ENCODE measurements at regions of chr3 and their contacts with region 1.

Region 1: DNA sequence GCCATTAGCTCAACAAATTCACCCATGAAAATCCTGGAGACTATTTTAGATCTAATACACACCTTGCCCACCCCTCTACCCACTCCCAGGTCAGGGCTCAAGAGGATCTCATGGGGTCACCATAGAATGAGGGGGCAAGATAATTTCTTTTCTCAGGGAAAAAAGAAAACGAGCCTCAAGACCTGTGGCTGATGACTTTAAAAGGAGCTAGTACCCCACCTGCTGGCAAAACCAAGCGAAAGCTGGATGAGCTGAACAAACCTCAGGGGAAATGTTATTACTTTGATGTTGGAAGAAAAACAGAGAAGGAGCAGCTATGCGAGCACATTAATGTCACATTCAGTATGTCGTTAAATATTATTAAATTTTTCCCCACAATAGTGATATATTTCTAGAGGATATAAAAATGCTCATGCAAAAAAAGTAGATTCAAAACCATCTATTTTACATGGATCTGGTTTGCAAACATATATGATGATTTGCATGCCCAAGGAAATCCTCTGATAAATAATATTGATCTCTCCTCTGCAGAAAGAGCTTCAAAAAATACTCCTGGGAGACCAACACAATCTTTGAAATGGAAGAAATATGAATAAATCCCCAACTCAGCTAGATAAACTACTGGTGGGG is 37.7 kb downstream of the PLD1 start:
- DNase-seq: peak in 1 of 2 donors; percentile 74
- H3K4me3 ChIP-seq: peak overlapping the region in 1 of 2 donors; percentile 64
- H3K27ac ChIP-seq: peak overlapping the region in 1 of 2 donors; percentile 67
- H3K4me1 ChIP-seq: peaks cover 0 to 19% of the 10 kb centered on the region in 2 donors
- H3K27me3 ChIP-seq: no peaks in the 10 kb centered on the region
- CTCF ChIP-seq: peak; percentile 52 to 74 (median 62)

Region 2: DNA sequence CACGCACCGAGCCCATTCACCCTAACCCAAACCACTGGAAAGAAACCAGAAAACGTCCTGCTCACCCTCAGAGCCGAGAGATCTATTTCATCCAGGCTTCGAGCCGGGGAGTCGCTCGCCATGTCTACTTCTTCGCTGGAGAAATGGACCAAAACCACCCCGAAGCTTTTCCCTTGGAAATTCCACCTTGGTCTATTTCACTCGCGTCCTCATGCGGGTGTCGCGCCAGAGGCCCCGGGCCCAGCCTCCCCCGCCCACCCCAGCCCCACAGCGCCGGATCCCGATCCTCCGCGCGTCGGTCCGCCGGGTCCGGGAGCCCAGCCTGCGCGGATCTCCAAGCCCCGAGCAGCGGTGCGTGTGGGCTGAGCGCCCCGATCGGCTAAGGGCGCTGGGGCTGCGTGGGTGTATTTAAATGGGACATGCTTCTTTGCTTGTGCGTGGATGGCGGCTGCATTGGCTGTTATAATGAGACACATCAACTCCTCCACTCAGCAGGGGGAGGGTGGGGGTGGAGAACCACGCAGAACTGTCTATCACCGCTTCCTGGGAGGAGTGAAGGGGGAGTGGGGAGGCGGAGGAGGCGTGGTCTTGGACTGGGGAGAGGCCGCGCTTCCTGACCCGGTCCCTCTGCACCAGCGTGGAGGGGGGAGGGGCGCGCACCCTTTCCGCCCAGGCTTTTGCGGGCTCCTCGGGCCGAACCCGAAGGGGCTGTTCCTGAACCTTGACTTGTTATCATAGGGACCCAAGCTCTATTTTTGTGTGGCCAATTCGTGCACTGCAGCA is 312.4 kb before region 1 on chr3 and contains the start of gene TNIK:
- intact Hi-C with region 1: no loop called
- DNase-seq: peak; percentile 80 to 94
- H3K4me3 ChIP-seq: peak within 1 kb of the TSS; percentile 73 to 93
- H3K27ac ChIP-seq: peak within 1 kb of the TSS; percentile 54 to 66
- H3K4me1 ChIP-seq: peaks cover 0 to 4% of the 10 kb centered on the region in 2 donors
- H3K27me3 ChIP-seq: no peaks in the 10 kb centered on the region
- CTCF ChIP-seq: peak in 1 of 3 experiments; percentile 3
- total RNA-seq, gene TNIK: 0.75 TPM

Region 3: DNA sequence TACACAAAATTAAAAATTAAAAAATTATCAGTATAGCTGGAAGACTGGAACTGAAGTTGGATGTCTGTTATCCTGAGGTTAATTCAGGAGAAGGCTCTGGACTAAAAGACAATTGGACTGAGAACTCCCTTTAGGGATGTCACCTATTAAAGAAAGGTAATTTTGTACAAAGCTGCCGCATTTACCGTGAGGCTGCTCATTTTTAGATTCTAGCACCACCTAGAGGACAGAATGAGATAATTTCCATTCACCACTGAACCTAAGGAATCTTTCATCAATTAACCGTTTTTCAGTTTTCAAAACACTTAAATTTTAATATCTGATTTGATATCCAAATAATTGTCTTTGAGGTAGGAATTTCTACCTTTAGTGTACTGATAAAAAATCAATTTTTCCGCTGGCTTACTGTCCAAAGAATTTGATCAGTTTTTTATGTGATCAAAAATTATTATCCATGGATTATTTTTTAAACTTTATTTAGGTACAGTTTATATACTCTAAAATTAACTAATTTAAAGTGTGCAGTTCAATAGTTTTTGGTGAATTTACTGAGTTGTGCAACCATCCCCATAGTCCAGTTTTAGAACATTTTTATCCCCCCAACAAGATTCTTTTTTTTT is 205.6 kb before region 1 on chr3:
- intact Hi-C with region 1: no loop called
- DNase-seq: no peak
- H3K4me3 ChIP-seq: no peak overlapping the region
- H3K27ac ChIP-seq: no peak overlapping the region
- H3K4me1 ChIP-seq: no peaks in the 10 kb centered on the region
- H3K27me3 ChIP-seq: no peaks in the 10 kb centered on the region
- CTCF ChIP-seq: peak; percentile 72 to 85 (median 83)

Region 4: GRCh38 chr3:171646357-171647133 is 126.0 kb before region 1 on chr3:
- intact Hi-C with region 1: loop called (anchors 1 kb)
- DNase-seq: no peak
- H3K4me3 ChIP-seq: no peak overlapping the region
- H3K27ac ChIP-seq: peak overlapping the region; percentile 8 to 49
- H3K4me1 ChIP-seq: no peaks in the 10 kb centered on the region
- H3K27me3 ChIP-seq: no peaks in the 10 kb centered on the region
- CTCF ChIP-seq: peak; percentile 55 to 78 (median 73)

Region 5: GRCh38 chr3:171703756-171704401 is 68.7 kb before region 1 on chr3:
- intact Hi-C with region 1: loop called (anchors 1 kb)
- DNase-seq: no peak
- H3K4me3 ChIP-seq: no peak overlapping the region
- H3K27ac ChIP-seq: no peak overlapping the region
- H3K4me1 ChIP-seq: peaks cover 0 to 5% of the 10 kb centered on the region in 2 donors
- H3K27me3 ChIP-seq: no peaks in the 10 kb centered on the region
- CTCF ChIP-seq: peak in 1 of 3 experiments; percentile 42

Region 6: GRCh38 chr3:171748064-171748918 is 24.3 kb before region 1 on chr3:
- intact Hi-C with region 1: loop called (anchors 2 kb)
- DNase-seq: no peak
- H3K4me3 ChIP-seq: peak overlapping the region; percentile 5 to 32
- H3K27ac ChIP-seq: peak overlapping the region; percentile 54 to 69
- H3K4me1 ChIP-seq: peaks cover 0 to 23% of the 10 kb centered on the region in 2 donors
- H3K27me3 ChIP-seq: no peaks in the 10 kb centered on the region
- CTCF ChIP-seq: no peak

Region 7: DNA sequence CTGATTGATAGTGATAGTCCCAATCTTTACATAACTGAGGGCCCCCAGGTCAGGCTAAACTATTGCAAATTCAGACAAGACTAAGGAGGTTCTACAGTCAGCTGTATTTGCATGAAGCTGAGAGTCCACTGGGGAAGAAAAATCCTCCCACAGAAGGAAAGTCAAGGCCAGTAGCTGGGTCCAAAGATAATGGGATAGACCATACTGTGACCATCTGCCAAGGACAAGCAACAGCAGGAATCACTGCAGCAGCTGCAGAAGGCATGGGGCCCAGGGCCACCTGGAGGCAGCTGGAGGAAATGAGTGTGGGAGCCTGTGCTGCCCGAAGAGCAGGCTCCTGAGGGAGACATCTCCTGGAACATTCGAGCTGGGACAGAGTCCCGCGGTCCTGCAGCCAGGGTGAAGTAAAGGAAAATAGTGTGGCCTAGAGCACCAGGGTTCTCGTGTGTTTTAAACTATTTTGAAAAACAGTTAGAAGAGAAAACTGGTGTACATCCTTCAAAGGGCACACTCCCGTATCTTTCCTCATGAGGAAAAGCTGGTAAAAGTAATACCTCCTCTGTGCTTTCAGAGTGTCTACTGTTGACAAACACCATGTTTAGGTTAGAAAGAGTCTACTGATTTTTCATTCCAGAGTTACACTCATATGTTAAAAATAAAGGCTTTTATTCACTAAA is 57.4 kb after region 1 on chr3:
- intact Hi-C with region 1: loop called (anchors 5 kb)
- DNase-seq: peak in 1 of 2 donors; percentile 75
- H3K4me3 ChIP-seq: no peak overlapping the region
- H3K27ac ChIP-seq: peak overlapping the region in 1 of 2 donors; percentile 18
- H3K4me1 ChIP-seq: peaks cover 0 to 9% of the 10 kb centered on the region in 2 donors
- H3K27me3 ChIP-seq: no peaks in the 10 kb centered on the region
- CTCF ChIP-seq: peak; percentile 43 to 66 (median 59)

Region 8: GRCh38 chr3:171874251-171874679 is 101.7 kb after region 1 on chr3:
- intact Hi-C with region 1: no loop called
- DNase-seq: peak in 1 of 2 donors; percentile 67
- H3K4me3 ChIP-seq: no peak overlapping the region
- H3K27ac ChIP-seq: peak overlapping the region; percentile 56 to 70
- H3K4me1 ChIP-seq: peaks cover 10 to 22% of the 10 kb centered on the region in 2 donors
- H3K27me3 ChIP-seq: no peaks in the 10 kb centered on the region
- CTCF ChIP-seq: no peak

Region 9: GRCh38 chr3:172370419-172370818 is 597.9 kb after region 1 on chr3:
- intact Hi-C with region 1: no loop called
- DNase-seq: no peak
- H3K4me3 ChIP-seq: no peak overlapping the region
- H3K27ac ChIP-seq: no peak overlapping the region
- H3K4me1 ChIP-seq: no peaks in the 10 kb centered on the region
- H3K27me3 ChIP-seq: no peaks in the 10 kb centered on the region
- CTCF ChIP-seq: no peak